ENCODE measurements at regions of chr15 and their contacts with region 1.

Region 1: GRCh38 chr15:90233376-90234095 is at the start of gene CIB1:
- DNase-seq: peak; percentile 96 to 98 (median 96)
- H3K4me3 ChIP-seq: peak within 1 kb of the TSS; percentile 81 to 100
- H3K4me3 Mint-ChIP-seq: peak within 1 kb of the TSS; percentile 89 to 96 (median 94)
- H3K27ac ChIP-seq: peak within 1 kb of the TSS; percentile 96
- H3K27ac Mint-ChIP-seq: peak within 1 kb of the TSS; percentile 95 to 100 (median 100)
- H3K4me1 ChIP-seq: peaks cover 53% of the 10 kb centered on the region
- H3K4me1 Mint-ChIP-seq: peaks cover 36 to 61% (median 48%) of the 10 kb centered on the region in 4 donors
- H3K27me3 ChIP-seq: no peaks in the 10 kb centered on the region
- H3K27me3 Mint-ChIP-seq: no peaks in the 10 kb centered on the region
- total RNA-seq, gene CIB1: 95.2 to 98.2 TPM

Region 2: DNA sequence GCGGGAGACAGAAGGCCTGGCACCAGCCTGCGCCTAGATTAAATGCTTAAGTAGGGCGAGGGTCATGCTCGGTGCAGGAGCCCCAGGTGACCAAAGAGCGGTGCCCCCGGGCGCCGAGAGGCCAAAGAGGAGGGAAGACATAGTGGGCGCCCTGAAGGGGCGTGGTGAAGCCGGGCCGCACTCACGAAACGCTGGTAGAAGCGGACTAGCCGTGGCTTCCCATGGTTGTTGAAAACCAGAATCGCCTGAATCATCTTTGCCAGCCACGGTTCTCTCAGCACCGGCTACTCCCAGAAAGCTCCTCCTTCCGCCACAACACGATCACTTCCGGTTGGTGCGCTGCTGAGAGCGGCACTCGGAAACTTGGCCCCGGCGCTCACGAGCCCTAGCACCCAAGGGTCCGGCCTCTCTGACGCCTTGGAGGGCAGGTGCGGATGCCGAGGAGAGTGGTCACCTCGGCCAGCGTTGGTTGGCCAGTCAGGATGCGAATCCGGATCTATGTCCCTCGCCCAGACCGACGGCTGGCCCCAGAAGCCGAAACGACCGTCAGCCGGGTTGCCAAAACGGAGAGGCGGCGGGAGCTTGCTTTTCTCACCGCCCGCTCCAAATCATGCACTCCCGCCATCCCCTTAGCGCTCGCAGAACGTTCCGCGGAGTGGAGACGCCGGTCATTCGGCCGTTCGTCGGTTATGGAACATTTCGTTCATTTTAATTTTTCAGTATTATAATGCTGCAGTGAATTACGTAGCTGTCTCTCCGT is 339.7 kb before region 1 on chr15 and contains the start of gene AP3S2:
- CTCF ChIA-PET with region 1: no interaction called
- POLR2A ChIA-PET with region 1: interaction called, 8 read pairs
- intact Hi-C with region 1: loop called (anchors 5 kb)
- DNase-seq: peak; percentile 85 to 90 (median 86)
- H3K4me3 ChIP-seq: peak within 1 kb of the TSS; percentile 65 to 70
- H3K4me3 Mint-ChIP-seq: peak within 1 kb of the TSS; percentile 93 to 99 (median 98)
- H3K27ac ChIP-seq: peak within 1 kb of the TSS; percentile 84
- H3K27ac Mint-ChIP-seq: peak within 1 kb of the TSS; percentile 95 to 98 (median 97)
- H3K4me1 ChIP-seq: peaks cover 34% of the 10 kb centered on the region
- H3K4me1 Mint-ChIP-seq: peaks cover 20 to 46% (median 37%) of the 10 kb centered on the region in 4 donors
- H3K27me3 ChIP-seq: no peaks in the 10 kb centered on the region
- H3K27me3 Mint-ChIP-seq: no peaks in the 10 kb centered on the region
- total RNA-seq, gene AP3S2: 34.3 to 36.6 TPM

Region 3: DNA sequence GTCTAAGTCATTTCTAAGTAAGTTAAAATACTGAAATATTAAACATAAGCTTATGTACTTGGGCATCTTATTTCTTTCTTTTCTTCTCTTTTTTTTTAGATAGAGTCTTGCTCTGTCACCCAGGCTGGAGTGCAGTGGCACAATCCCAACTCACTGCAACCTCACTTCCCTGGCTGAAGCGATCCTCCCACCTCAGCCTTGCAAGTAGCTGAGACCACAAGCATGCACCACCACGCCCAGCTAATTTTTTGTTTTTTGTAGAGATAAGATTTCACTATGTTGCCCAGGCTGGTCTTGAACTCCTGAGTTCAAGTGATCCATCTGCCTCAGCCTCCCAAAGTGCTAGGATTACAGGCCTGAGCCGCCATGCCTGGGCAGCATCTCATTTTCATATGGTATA is 248.4 kb before region 1 on chr15:
- CTCF ChIA-PET with region 1: no interaction called
- POLR2A ChIA-PET with region 1: no interaction called
- intact Hi-C with region 1: no loop called
- DNase-seq: no peak
- H3K4me3 ChIP-seq: no peak overlapping the region
- H3K4me3 Mint-ChIP-seq: no peak overlapping the region
- H3K27ac ChIP-seq: no peak overlapping the region
- H3K27ac Mint-ChIP-seq: peak overlapping the region in 1 of 7 donors; percentile 56
- H3K4me1 ChIP-seq: no peaks in the 10 kb centered on the region
- H3K4me1 Mint-ChIP-seq: no peaks in the 10 kb centered on the region
- H3K27me3 ChIP-seq: no peaks in the 10 kb centered on the region
- H3K27me3 Mint-ChIP-seq: peaks cover 0 to 2% of the 10 kb centered on the region in 2 donors

Region 4: GRCh38 chr15:90154861-90155626 is 78.5 kb before region 1 on chr15:
- CTCF ChIA-PET with region 1: no interaction called
- POLR2A ChIA-PET with region 1: no interaction called
- intact Hi-C with region 1: no loop called
- DNase-seq: no peak
- H3K4me3 ChIP-seq: no peak overlapping the region
- H3K4me3 Mint-ChIP-seq: no peak overlapping the region
- H3K27ac ChIP-seq: no peak overlapping the region
- H3K27ac Mint-ChIP-seq: no peak overlapping the region
- H3K4me1 ChIP-seq: peaks cover 9% of the 10 kb centered on the region
- H3K4me1 Mint-ChIP-seq: peaks cover 6 to 13% (median 10%) of the 10 kb centered on the region in 4 donors
- H3K27me3 ChIP-seq: no peaks in the 10 kb centered on the region
- H3K27me3 Mint-ChIP-seq: no peaks in the 10 kb centered on the region

Region 5: DNA sequence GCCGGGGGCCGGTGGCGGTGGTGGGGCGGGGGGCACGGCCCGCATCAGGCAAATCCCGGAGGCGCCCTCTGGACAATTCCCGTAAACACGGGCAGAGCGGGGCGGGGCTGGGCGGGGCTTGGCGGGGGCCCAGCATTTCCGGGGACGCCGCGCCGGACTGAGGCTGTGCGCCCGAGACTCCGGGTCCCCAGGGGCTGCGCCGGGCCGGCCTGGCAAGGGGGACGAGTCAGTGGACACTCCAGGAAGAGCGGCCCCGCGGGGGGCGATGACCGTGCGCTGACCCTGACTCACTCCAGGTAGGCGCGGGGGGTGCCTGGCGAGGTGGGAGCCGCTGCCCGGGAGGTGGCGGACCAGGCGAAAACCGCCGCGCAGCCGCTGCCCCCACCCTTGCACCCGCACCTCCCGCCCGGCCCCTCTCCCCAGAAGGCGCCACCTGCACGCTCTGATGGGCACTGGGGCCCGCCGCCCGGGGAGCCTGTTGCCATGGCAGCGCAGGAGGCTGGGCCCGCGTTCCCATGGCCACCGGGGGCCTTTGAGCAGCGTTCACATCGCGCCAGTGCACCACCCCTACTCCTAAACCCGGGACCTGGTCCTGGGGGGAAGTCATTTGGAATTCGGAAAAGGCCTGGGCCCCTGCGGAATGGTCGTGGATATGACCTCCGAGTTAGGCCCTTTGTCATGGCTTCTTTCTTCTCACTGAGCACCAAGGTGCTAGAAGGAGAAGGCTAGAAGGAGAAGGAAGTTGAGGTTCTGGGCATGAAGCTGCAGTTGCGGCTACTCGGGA is 48.6 kb before region 1 on chr15:
- CTCF ChIA-PET with region 1: no interaction called
- POLR2A ChIA-PET with region 1: interaction called, 3 read pairs
- intact Hi-C with region 1: loop called (anchors 2 kb)
- DNase-seq: peak; percentile 56 to 71 (median 65)
- H3K4me3 ChIP-seq: peak overlapping the region; percentile 6 to 63
- H3K4me3 Mint-ChIP-seq: peak overlapping the region; percentile 81 to 92 (median 88)
- H3K27ac ChIP-seq: peak overlapping the region; percentile 51
- H3K27ac Mint-ChIP-seq: peak overlapping the region; percentile 4 to 86 (median 81)
- H3K4me1 ChIP-seq: peaks cover 17% of the 10 kb centered on the region
- H3K4me1 Mint-ChIP-seq: peaks cover 10 to 18% (median 14%) of the 10 kb centered on the region in 4 donors
- H3K27me3 ChIP-seq: no peaks in the 10 kb centered on the region
- H3K27me3 Mint-ChIP-seq: no peaks in the 10 kb centered on the region

Region 6: DNA sequence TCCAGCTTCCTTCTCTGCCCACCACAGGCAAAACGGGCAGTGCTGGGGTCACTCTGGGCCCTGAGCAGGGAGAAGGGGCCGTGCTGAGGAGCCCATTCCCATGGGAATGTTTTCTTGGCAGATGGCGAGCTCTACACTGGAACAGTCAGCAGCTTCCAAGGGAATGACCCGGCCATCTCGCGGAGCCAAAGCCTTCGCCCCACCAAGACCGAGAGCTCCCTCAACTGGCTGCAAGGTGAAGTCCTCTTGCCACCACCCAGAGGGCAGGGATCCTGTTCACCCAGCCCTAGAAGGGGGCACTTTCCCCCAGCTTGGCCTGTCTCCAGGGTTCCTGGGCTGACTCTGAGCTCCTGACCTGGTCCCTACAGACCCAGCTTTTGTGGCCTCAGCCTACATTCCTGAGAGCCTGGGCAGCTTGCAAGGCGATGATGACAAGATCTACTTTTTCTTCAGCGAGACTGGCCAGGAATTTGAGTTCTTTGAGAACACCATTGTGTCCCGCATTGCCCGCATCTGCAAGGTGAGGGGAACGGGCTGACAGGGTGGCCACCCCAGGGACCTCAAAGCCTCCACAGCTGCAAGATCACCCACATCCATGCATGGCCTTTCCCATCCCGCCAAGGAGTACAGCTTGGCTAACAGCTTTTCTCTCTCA is 12.2 kb before region 1 on chr15:
- CTCF ChIA-PET with region 1: interaction called, 22 read pairs
- POLR2A ChIA-PET with region 1: interaction called, 10 read pairs
- intact Hi-C with region 1: loop called (anchors 1 kb)
- DNase-seq: no peak
- H3K4me3 ChIP-seq: no peak overlapping the region
- H3K4me3 Mint-ChIP-seq: no peak overlapping the region
- H3K27ac ChIP-seq: no peak overlapping the region
- H3K27ac Mint-ChIP-seq: no peak overlapping the region
- H3K4me1 ChIP-seq: no peaks in the 10 kb centered on the region
- H3K4me1 Mint-ChIP-seq: peaks cover 6 to 13% (median 8%) of the 10 kb centered on the region in 4 donors
- H3K27me3 ChIP-seq: no peaks in the 10 kb centered on the region
- H3K27me3 Mint-ChIP-seq: no peaks in the 10 kb centered on the region

Region 7: GRCh38 chr15:90265271-90266060 is 31.9 kb after region 1 on chr15 and contains the start of gene NGRN:
- CTCF ChIA-PET with region 1: interaction called, 8 read pairs
- POLR2A ChIA-PET with region 1: interaction called, 150 read pairs
- intact Hi-C with region 1: loop called (anchors 1 kb)
- DNase-seq: peak; percentile 92 to 95 (median 94)
- H3K4me3 ChIP-seq: peak within 1 kb of the TSS; percentile 66 to 97
- H3K4me3 Mint-ChIP-seq: peak within 1 kb of the TSS; percentile 93 to 99 (median 98)
- H3K27ac ChIP-seq: peak within 1 kb of the TSS; percentile 95
- H3K27ac Mint-ChIP-seq: peak within 1 kb of the TSS; percentile 98 to 100 (median 99)
- H3K4me1 ChIP-seq: peaks cover 44% of the 10 kb centered on the region
- H3K4me1 Mint-ChIP-seq: peaks cover 26 to 62% (median 42%) of the 10 kb centered on the region in 4 donors
- H3K27me3 ChIP-seq: no peaks in the 10 kb centered on the region
- H3K27me3 Mint-ChIP-seq: no peaks in the 10 kb centered on the region
- total RNA-seq, gene NGRN: 53.7 to 59.2 TPM

Measured in CD4-positive, alpha-beta memory T cell (primary cell).